GM23248 (cell line): ENCODE measurements at regions of chr5 and their contacts with region 1.

Region 1: GRCh38 chr5:66828548-66829357 is 232.6 kb downstream of the MAST4 start:
- DNase-seq: peak; percentile 91
- H3K4me3 ChIP-seq: peak overlapping the region; percentile 84
- H3K27ac ChIP-seq: peak overlapping the region; percentile 35
- H3K4me1 ChIP-seq: peaks cover 8% of the 10 kb centered on the region
- H3K27me3 ChIP-seq: no peaks in the 10 kb centered on the region

Region 2: DNA sequence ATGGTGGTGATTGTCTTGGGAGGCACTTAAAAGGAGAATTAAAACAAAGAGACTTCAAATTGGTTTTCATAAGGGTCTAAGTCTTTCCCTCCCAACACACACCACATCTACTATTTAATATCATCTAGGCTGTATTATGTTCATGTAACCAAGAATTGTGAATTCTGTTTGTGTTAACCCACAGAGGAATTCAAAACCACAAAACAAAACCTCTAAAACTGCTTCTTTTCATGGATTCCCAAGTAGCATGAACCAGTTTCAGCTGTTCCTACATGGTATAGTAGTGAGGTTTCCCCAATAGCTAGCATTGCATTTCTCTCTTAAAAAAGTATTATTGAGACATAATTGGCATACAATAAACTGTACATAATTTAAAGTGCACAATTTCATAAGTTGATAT is 84.0 kb after region 1 on chr5:
- in situ Hi-C with region 1: no loop called
- DNase-seq: no peak
- H3K4me3 ChIP-seq: no peak overlapping the region
- H3K27ac ChIP-seq: no peak overlapping the region
- H3K4me1 ChIP-seq: no peaks in the 10 kb centered on the region
- H3K27me3 ChIP-seq: no peaks in the 10 kb centered on the region

Region 3: DNA sequence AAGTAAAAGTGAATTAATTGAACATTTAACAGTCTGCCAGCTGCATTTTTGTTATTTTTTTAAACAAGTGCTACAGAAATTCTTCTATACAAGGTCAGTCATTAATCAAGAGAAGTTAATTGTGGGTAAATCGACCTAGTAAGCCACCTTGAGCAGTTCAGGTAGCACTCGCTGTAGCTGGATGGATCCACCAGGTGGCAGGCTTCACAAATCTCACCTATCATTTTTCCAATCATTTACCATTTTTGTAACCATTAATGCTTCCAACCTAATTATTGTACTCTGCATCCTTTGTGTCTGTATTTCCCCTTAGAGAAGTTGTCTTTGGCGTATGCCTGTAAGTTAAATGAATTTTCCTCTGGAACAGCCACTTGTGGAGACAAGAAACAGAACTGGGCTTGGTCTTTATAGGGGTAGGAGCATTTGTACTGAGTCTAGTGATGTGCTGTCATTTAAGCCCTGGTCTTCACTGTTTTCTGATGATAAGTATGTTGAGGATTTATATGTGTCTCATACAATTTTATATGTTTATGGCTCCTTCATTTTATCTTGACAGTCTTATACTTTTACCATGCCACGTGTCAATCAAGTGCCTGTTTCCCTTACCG is 328.3 kb after region 1 on chr5:
- in situ Hi-C with region 1: loop called (anchors 10 kb)
- DNase-seq: peak; percentile 50
- H3K4me3 ChIP-seq: no peak overlapping the region
- H3K27ac ChIP-seq: no peak overlapping the region
- H3K4me1 ChIP-seq: peaks cover 15% of the 10 kb centered on the region
- H3K27me3 ChIP-seq: no peaks in the 10 kb centered on the region